Psoas muscle (tissue), 8 donors: ENCODE measurements at regions of chr5 and their contacts with region 1.

Region 1: GRCh38 chr5:160399402-160400353 is at the start of gene FAM200C:
- DNase-seq: peak; percentile 93 to 96
- ATAC-seq: peak; percentile 96 to 99 (median 98)
- H3K4me3 ChIP-seq: peak within 1 kb of the TSS; percentile 86
- H3K27ac ChIP-seq: peak within 1 kb of the TSS; percentile 84
- H3K4me1 ChIP-seq: peaks cover 24% of the 10 kb centered on the region
- H3K27me3 ChIP-seq: no peaks in the 10 kb centered on the region
- CTCF ChIP-seq: no peak
- total RNA-seq, gene FAM200C: 0.54 to 3.3 (median 1.2) TPM

Region 2: GRCh38 chr5:159274676-159275075 is 1125.0 kb before region 1 on chr5:
- intact Hi-C with region 1: loop called in 1 of 2 experiments (anchors 10 kb)
- DNase-seq: no peak
- ATAC-seq: no peak
- H3K4me3 ChIP-seq: no peak overlapping the region
- H3K27ac ChIP-seq: no peak overlapping the region
- H3K4me1 ChIP-seq: no peaks in the 10 kb centered on the region
- H3K27me3 ChIP-seq: no peaks in the 10 kb centered on the region
- CTCF ChIP-seq: no peak

Region 3: GRCh38 chr5:160324886-160325285 is 74.8 kb before region 1 on chr5:
- intact Hi-C with region 1: no loop called
- DNase-seq: no peak
- ATAC-seq: no peak
- H3K4me3 ChIP-seq: no peak overlapping the region
- H3K27ac ChIP-seq: no peak overlapping the region
- H3K4me1 ChIP-seq: no peaks in the 10 kb centered on the region
- H3K27me3 ChIP-seq: no peaks in the 10 kb centered on the region
- CTCF ChIP-seq: no peak

Region 4: DNA sequence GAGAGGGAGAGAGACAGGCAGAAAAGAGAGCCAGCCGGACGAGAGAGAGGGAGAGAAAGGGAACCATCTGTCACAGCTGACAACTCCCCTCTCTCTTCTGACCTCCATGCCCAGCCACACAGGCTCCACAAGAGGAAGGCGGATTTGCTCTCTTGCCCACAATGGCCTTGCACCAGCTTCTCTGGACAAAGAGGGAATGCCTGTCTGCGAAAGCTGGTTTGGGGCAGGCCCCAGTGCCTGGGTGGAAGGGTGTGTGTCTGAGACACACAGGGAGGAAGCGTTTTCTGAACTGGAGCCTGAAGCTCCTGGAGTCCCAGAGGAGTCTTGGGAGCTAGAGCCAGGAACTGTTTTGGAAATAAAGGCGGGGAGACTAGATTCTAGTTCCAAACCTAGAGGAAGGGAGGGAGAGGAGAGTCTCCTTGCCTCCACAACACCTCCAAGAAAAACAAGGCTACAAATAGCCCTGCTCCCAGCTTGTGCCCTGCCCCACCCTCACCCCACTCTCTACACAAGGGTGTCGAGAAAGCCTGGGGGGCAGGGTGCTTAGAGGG is 41.7 kb before region 1 on chr5:
- intact Hi-C with region 1: no loop called
- DNase-seq: peak; percentile 33 to 58
- ATAC-seq: peak in 3 of 4 donors; percentile 16 to 36 (median 20)
- H3K4me3 ChIP-seq: no peak overlapping the region
- H3K27ac ChIP-seq: peak overlapping the region; percentile 46
- H3K4me1 ChIP-seq: peaks cover 22% of the 10 kb centered on the region
- H3K27me3 ChIP-seq: no peaks in the 10 kb centered on the region
- CTCF ChIP-seq: no peak

Region 5: GRCh38 chr5:160418561-160419457 is 19.1 kb after region 1 on chr5 and contains the start of gene SLU7:
- intact Hi-C with region 1: loop called (anchors 1 to 2 kb)
- DNase-seq: peak; percentile 94 to 97
- ATAC-seq: peak; percentile 92 to 95 (median 94)
- H3K4me3 ChIP-seq: peak within 1 kb of the TSS; percentile 95
- H3K27ac ChIP-seq: peak within 1 kb of the TSS; percentile 92
- H3K4me1 ChIP-seq: peaks cover 21% of the 10 kb centered on the region
- H3K27me3 ChIP-seq: no peaks in the 10 kb centered on the region
- CTCF ChIP-seq: no peak
- total RNA-seq, gene SLU7: 40.1 to 71.4 (median 60.3) TPM

Region 6: GRCh38 chr5:161138751-161139455 is 739.2 kb after region 1 on chr5:
- intact Hi-C with region 1: no loop called
- DNase-seq: no peak
- ATAC-seq: no peak
- H3K4me3 ChIP-seq: no peak overlapping the region
- H3K27ac ChIP-seq: no peak overlapping the region
- H3K4me1 ChIP-seq: no peaks in the 10 kb centered on the region
- H3K27me3 ChIP-seq: no peaks in the 10 kb centered on the region
- CTCF ChIP-seq: no peak